GM13977 (cell line): ENCODE measurements at regions of chr15 and their contacts with region 1.

Region 1: DNA sequence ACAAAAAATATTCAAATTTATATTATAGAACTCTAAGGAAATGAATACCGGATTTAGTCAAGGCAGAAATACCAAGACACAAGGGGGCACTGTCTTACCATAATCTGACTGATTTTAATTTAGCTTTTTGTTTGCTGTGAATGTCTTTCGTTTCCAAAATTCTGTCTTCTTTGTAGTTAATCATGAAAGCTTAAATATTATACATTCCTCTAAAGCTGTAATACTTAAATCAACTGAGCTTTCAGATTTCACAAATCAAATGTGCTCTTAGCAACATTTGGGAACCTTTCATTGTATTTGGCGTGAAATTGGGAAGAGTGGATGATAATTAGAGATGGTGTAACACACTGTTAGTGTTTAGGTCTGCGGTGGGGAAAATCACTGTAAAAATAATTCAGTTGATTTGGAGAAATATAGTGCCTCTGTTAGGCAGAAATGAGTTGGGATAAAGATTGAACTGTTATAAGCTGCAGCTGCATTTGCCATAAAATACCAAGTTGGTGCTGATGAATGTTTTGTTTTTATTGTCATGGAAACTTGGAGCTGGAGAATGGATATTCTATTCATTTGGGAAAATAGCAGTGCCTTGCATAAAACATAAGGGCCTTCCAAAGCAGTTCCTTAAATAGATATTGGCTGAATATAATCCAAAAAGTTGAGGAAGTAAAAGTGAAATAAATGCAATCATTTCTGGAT is 228.2 kb downstream of the TCF12 start:
- DNase-seq: peak; percentile 13
- CTCF ChIP-seq: peak; percentile 58

Region 2: GRCh38 chr15:57090496-57090859 is 56.2 kb before region 1 on chr15:
- in situ Hi-C with region 1: no loop called
- DNase-seq: no peak
- CTCF ChIP-seq: no peak

Region 3: DNA sequence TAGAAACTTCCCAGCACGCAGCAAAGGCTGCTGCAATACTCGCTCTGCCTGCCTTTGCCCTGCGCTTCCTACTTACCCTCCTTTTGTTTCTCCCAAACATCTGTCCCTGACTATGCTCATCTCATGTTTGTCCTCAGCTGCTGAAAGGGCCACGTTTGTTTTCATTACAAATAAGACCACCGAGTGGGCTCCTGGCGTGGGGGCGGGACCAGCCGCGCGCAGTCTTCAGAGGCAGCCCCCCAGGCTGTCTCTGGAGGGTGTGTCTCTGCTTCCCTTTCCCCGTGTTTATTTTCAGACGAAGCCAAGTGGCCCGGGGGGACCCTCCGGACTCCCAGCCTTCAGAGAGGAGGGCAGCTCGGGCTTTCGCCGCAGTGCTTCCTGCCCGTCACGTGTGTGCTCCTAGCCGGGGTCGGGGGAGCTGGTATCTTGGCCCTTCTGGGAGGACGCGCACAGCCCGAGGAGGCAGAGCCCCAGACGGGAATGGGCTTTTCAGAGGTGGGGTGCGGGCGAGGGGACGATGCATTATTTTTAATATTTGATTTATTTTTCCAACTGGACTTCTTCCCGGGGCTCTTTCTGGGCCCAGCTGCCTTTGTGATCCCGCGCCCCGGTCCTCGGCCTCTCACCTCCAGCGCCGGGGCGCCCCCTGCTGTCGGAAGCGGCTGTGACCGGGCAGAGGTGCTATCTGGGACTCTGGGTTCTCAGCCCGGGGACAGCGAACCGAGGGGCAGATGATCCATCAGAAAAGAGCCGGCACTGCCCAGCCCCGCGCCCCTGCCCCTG is 159.7 kb after region 1 on chr15:
- in situ Hi-C with region 1: loop called (anchors 5 kb)
- DNase-seq: peak; percentile 91
- CTCF ChIP-seq: peak; percentile 91

Region 4: GRCh38 chr15:57527382-57528091 is 380.9 kb after region 1 on chr15:
- in situ Hi-C with region 1: loop called (anchors 25 kb)
- DNase-seq: peak; percentile 65
- CTCF ChIP-seq: peak; percentile 65

Region 5: DNA sequence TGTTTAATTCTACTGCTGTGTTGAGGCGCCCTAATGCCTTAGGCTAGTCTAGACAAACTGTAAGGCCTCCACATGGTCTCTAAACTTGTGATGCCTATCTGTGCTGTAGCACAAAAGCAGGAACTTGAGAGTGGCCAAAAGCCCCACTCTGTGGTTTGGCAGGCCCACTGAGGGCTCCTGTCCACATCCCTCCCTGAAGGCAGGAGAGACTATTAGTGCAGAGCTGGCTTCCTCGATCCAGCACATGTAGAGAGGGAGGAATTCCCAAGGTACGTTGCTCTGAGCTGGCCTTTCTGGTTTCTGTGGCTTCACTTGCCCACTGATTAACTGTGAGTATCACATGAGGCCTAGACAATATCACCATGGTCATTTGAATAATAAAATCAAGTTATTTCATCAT is 650.5 kb after region 1 on chr15:
- in situ Hi-C with region 1: no loop called
- DNase-seq: no peak
- CTCF ChIP-seq: no peak